ENCODE measurements at regions of chr5 and their contacts with region 1.

Region 1: DNA sequence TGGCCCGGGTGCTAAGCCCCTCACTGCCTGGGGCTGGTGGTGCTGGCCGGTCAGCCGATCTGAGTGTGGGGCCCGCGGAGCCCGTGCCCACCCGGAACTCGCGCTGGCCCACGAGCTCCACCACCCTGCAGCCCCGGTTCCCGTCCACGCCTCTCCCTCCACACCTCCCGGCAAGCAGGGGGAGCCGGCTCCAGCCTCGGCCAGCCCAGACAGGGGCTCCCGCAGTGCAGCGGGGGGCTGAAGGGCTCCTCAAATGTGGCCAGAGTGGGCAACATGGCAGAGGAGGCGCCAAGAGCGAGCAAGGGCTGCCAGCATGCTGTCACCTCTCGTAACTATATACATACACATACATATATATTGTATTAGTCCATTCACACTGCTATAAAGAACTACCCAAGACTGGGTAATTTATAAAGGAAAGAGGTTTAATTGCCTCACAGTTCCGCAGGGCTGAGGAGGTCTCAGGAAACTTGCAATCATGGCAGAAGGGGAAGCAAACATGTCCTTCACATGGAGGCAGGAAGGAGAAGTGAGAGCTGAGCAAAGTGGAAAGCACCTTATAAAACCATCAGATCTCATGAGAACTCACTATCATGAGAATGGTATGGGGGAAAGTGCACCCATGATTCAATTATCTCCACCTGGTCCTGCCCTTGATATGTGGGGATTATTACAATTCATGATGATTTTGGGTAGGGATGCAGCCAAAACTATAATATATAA is 56.8 kb downstream of the LIX1 start:
- DNase-seq: peak in 1 of 9 experiments; percentile 21
- ATAC-seq: no peak
- H3K4me3 ChIP-seq: no peak overlapping the region
- H3K4me3 Mint-ChIP-seq: no peak overlapping the region
- H3K27ac ChIP-seq: no peak overlapping the region
- H3K27ac Mint-ChIP-seq: no peak overlapping the region
- H3K4me1 ChIP-seq: no peaks in the 10 kb centered on the region
- H3K4me1 Mint-ChIP-seq: peaks cover 7% of the 10 kb centered on the region
- H3K27me3 ChIP-seq: no peaks in the 10 kb centered on the region
- H3K27me3 Mint-ChIP-seq: no peaks in the 10 kb centered on the region
- CTCF ChIP-seq: no peak

Region 2: GRCh38 chr5:96017951-96018350 is 1067.7 kb before region 1 on chr5:
- CTCF ChIA-PET with region 1: no interaction called
- POLR2A ChIA-PET with region 1: no interaction called
- intact Hi-C with region 1: loop called in 1 of 2 experiments (anchors 10 kb)
- DNase-seq: no peak
- ATAC-seq: no peak
- H3K4me3 ChIP-seq: no peak overlapping the region
- H3K4me3 Mint-ChIP-seq: no peak overlapping the region
- H3K27ac ChIP-seq: no peak overlapping the region
- H3K27ac Mint-ChIP-seq: no peak overlapping the region
- H3K4me1 ChIP-seq: no peaks in the 10 kb centered on the region
- H3K4me1 Mint-ChIP-seq: no peaks in the 10 kb centered on the region
- H3K27me3 ChIP-seq: no peaks in the 10 kb centered on the region
- H3K27me3 Mint-ChIP-seq: no peaks in the 10 kb centered on the region
- CTCF ChIP-seq: no peak

Region 3: GRCh38 chr5:97162045-97162444 is 76.4 kb after region 1 on chr5:
- CTCF ChIA-PET with region 1: no interaction called
- POLR2A ChIA-PET with region 1: no interaction called
- intact Hi-C with region 1: no loop called
- DNase-seq: peak in 7 of 9 experiments; percentile 21 to 79 (median 54)
- ATAC-seq: peak; percentile 58
- H3K4me3 ChIP-seq: no peak overlapping the region
- H3K4me3 Mint-ChIP-seq: no peak overlapping the region
- H3K27ac ChIP-seq: no peak overlapping the region
- H3K27ac Mint-ChIP-seq: no peak overlapping the region
- H3K4me1 ChIP-seq: no peaks in the 10 kb centered on the region
- H3K4me1 Mint-ChIP-seq: peaks cover 10% of the 10 kb centered on the region
- H3K27me3 ChIP-seq: no peaks in the 10 kb centered on the region
- H3K27me3 Mint-ChIP-seq: no peaks in the 10 kb centered on the region
- CTCF ChIP-seq: peak; percentile 93

Region 4: DNA sequence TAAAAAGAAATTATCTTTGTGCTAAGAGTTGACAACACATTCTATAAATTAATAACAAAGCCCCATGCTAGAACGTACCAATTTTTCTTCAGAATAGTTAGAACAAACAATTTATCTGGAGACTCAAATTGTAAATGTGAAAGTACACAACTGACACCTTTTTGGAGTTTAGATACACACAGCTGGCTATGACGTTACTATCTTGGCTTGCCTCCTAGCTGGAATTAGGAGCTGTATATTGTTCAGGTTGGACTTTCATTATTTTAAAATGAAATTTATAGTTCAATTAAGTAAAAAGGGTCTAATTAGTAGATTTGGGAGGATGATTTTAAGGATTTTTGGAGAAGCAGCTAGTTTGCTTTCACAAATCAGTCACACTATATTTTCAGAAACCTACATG is 491.3 kb after region 1 on chr5:
- CTCF ChIA-PET with region 1: no interaction called
- POLR2A ChIA-PET with region 1: no interaction called
- intact Hi-C with region 1: no loop called
- DNase-seq: no peak
- ATAC-seq: no peak
- H3K4me3 ChIP-seq: no peak overlapping the region
- H3K4me3 Mint-ChIP-seq: no peak overlapping the region
- H3K27ac ChIP-seq: no peak overlapping the region
- H3K27ac Mint-ChIP-seq: no peak overlapping the region
- H3K4me1 ChIP-seq: no peaks in the 10 kb centered on the region
- H3K4me1 Mint-ChIP-seq: no peaks in the 10 kb centered on the region
- H3K27me3 ChIP-seq: no peaks in the 10 kb centered on the region
- H3K27me3 Mint-ChIP-seq: no peaks in the 10 kb centered on the region
- CTCF ChIP-seq: no peak